HepG2 (cell line): ENCODE measurements at regions of chr19 and their contacts with region 1.

Region 1: GRCh38 chr19:17215125-17215971 is at the start of gene USE1:
- DNase-seq: peak; percentile 86
- ATAC-seq: peak; percentile 93
- H3K4me3 ChIP-seq: peak within 1 kb of the TSS; percentile 63 to 94 (median 81)
- H3K27ac ChIP-seq: peak within 1 kb of the TSS; percentile 97
- H3K4me1 ChIP-seq: peaks cover 36% of the 10 kb centered on the region
- H3K27me3 ChIP-seq: no peaks in the 10 kb centered on the region; a peak in 1 of 5 replicates
- CTCF ChIP-seq: 0 out of 2 replicates have a peak, but pooled peaks have one; percentile 10
- EP300 ChIP-seq: no peak; a peak in 1 of 4 replicates
- POLR2A ChIP-seq: peak; percentile 73 to 96
- RAD21 ChIP-seq: peak; percentile 68
- total RNA-seq, gene USE1: 9.9 and 10.3 TPM in 2 replicates

Region 2: GRCh38 chr19:17135001-17135853 is 80.1 kb before region 1 on chr19:
- CTCF ChIA-PET with region 1: no interaction called
- POLR2A ChIA-PET with region 1: no interaction called
- in situ Hi-C with region 1: no loop called
- intact Hi-C with region 1: no loop called
- DNase-seq: peak; percentile 87
- ATAC-seq: peak; percentile 72
- H3K4me3 ChIP-seq: peak overlapping the region in 1 of 3 experiments; percentile 49; a peak in 2 of 6 replicates
- H3K27ac ChIP-seq: peak overlapping the region; percentile 68
- H3K4me1 ChIP-seq: peaks cover 83% of the 10 kb centered on the region
- H3K27me3 ChIP-seq: no peaks in the 10 kb centered on the region
- CTCF ChIP-seq: peak; percentile 44
- EP300 ChIP-seq: no peak
- POLR2A ChIP-seq: no peak
- RAD21 ChIP-seq: no peak

Region 3: GRCh38 chr19:17235618-17236377 is 20.4 kb after region 1 on chr19:
- CTCF ChIA-PET with region 1: no interaction called
- POLR2A ChIA-PET with region 1: interaction called, 37 read pairs
- in situ Hi-C with region 1: no loop called
- intact Hi-C with region 1: no loop called
- DNase-seq: no peak
- ATAC-seq: no peak
- H3K4me3 ChIP-seq: no peak overlapping the region
- H3K27ac ChIP-seq: no peak overlapping the region
- H3K4me1 ChIP-seq: peaks cover 42% of the 10 kb centered on the region
- H3K27me3 ChIP-seq: no peaks in the 10 kb centered on the region
- CTCF ChIP-seq: no peak
- EP300 ChIP-seq: no peak
- POLR2A ChIP-seq: no peak
- RAD21 ChIP-seq: no peak

Region 4: GRCh38 chr19:17255150-17255621 is 39.8 kb after region 1 on chr19:
- CTCF ChIA-PET with region 1: no interaction called
- POLR2A ChIA-PET with region 1: interaction called, 18 read pairs
- in situ Hi-C with region 1: no loop called
- intact Hi-C with region 1: no loop called
- DNase-seq: peak; percentile 75
- ATAC-seq: peak; percentile 92
- H3K4me3 ChIP-seq: peak overlapping the region in 1 of 3 experiments; percentile 54; a peak in 2 of 6 replicates
- H3K27ac ChIP-seq: peak overlapping the region; percentile 24
- H3K4me1 ChIP-seq: peaks cover 33% of the 10 kb centered on the region
- H3K27me3 ChIP-seq: no peaks in the 10 kb centered on the region
- CTCF ChIP-seq: no peak; the same call in 1 of the 2 replicates
- EP300 ChIP-seq: no peak
- POLR2A ChIP-seq: no peak
- RAD21 ChIP-seq: no peak

Region 5: GRCh38 chr19:17266975-17267788 is 51.8 kb after region 1 on chr19 and contains the start of gene BABAM1:
- CTCF ChIA-PET with region 1: no interaction called
- POLR2A ChIA-PET with region 1: interaction called, 40 read pairs
- in situ Hi-C with region 1: no loop called
- intact Hi-C with region 1: no loop called
- DNase-seq: peak; percentile 99
- ATAC-seq: peak; percentile 96
- H3K4me3 ChIP-seq: peak within 1 kb of the TSS; percentile 92 to 100 (median 98)
- H3K27ac ChIP-seq: peak within 1 kb of the TSS; percentile 75
- H3K4me1 ChIP-seq: peaks cover 38% of the 10 kb centered on the region
- H3K27me3 ChIP-seq: peaks cover 0 to 6% of the 10 kb centered on the region in 2 experiments; a peak in 2 of 5 replicates
- CTCF ChIP-seq: no peak
- EP300 ChIP-seq: peak in 1 of 2 experiments; percentile 35; a peak in 1 of 4 replicates
- POLR2A ChIP-seq: peak; percentile 65 to 82
- RAD21 ChIP-seq: no peak
- total RNA-seq, gene BABAM1: 62.2 and 70.0 TPM in 2 replicates